HEK293 (cell line): ENCODE measurements at regions of chr22 and their contacts with region 1.

Region 1: GRCh38 chr22:41697126-41697775 is 2.1 kb upstream of the MEI1 start:
- H3K4me3 ChIP-seq: no peak overlapping the region
- H3K27ac ChIP-seq: no peak overlapping the region
- H3K4me1 ChIP-seq: no peaks in the 10 kb centered on the region
- CTCF ChIP-seq: peak; percentile 94

Region 2: DNA sequence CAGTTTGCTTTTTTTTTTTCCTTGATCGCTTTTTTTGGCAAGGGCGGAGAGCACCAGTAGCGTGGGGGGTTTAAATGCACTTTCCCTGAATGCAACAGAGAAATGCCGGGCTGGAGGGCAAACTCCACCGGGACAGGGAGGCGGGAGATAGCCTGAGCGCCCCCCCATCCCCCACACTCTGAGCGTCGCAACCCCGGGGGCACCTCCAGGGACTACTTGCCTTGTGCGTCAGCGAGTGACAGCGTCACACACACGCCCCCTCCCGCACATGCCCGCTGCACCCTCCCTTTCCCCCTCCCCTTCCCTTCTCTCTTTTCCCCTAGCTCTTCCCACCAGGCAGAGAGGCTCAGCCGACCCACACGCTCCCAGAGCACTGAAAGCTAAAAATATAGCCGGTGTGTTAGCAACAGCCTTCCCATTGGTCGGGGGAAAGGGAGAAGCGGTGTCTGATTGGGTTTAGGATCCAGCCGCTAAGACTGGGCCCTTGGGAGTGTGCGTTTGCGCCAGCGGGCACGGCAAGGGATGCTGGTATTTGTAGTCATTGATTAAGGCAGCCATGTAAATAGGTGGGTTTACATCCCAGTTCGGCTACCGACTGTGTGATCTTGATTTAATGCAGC is 249.0 kb before region 1 on chr22:
- CTCF ChIA-PET with region 1: no interaction called
- POLR2A ChIA-PET with region 1: no interaction called
- H3K4me3 ChIP-seq: peak overlapping the region; percentile 90
- H3K27ac ChIP-seq: peak overlapping the region; percentile 100
- H3K4me1 ChIP-seq: no peaks in the 10 kb centered on the region
- CTCF ChIP-seq: 0 out of 2 replicates have a peak, but pooled peaks have one; percentile 14

Region 3: GRCh38 chr22:41608386-41608785 is 88.9 kb before region 1 on chr22:
- CTCF ChIA-PET with region 1: no interaction called
- POLR2A ChIA-PET with region 1: no interaction called
- H3K4me3 ChIP-seq: no peak overlapping the region
- H3K27ac ChIP-seq: no peak overlapping the region
- H3K4me1 ChIP-seq: no peaks in the 10 kb centered on the region
- CTCF ChIP-seq: no peak

Region 4: DNA sequence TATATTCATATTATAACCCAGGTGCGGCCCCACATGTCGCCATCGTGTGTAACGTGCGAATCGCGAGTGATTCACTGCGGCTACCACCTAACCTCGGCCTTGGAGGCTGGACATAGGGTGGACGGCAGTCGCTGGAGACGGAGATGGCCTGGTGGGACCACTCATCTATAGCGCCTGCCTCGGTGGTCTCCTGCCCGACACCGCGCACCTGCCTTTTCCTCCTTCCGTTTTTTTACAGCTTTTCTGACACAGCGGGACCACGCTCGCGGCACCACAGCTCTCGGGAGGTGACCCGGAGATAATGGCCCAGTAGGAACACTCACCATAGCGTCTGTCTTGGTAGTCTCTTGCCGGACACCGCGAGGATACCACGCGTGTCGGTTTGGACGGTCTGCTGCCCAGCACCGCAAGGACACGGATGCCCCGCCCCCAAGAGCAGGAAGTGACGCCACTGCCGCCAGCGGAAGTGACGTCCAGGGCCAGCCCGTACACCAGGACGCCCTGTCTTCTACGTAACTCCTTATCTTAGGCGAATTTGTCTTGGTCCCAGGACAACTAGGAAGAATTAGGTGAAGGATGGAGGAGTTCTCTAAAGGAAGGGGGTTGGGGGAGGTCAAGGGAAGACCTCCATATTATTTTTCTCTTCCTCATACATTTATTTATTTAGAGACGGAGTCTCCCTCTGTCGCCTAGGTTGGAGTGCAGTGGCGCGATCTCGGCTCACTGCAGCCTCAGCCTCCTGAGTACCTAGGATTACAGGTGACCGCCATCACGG is 15.0 kb before region 1 on chr22:
- CTCF ChIA-PET with region 1: interaction called, 39 read pairs
- POLR2A ChIA-PET with region 1: no interaction called
- H3K4me3 ChIP-seq: peak overlapping the region; percentile 81
- H3K27ac ChIP-seq: peak overlapping the region; percentile 66
- H3K4me1 ChIP-seq: peaks cover 4% of the 10 kb centered on the region; the same call in 1 of the 2 replicates
- CTCF ChIP-seq: no peak

Region 5: GRCh38 chr22:41739576-41739975 is 42.3 kb after region 1 on chr22:
- CTCF ChIA-PET with region 1: interaction called, 72 read pairs
- POLR2A ChIA-PET with region 1: interaction called, 3 read pairs
- H3K4me3 ChIP-seq: no peak overlapping the region
- H3K27ac ChIP-seq: no peak overlapping the region
- H3K4me1 ChIP-seq: no peaks in the 10 kb centered on the region; the same call in 1 of the 2 replicates
- CTCF ChIP-seq: no peak

Region 6: DNA sequence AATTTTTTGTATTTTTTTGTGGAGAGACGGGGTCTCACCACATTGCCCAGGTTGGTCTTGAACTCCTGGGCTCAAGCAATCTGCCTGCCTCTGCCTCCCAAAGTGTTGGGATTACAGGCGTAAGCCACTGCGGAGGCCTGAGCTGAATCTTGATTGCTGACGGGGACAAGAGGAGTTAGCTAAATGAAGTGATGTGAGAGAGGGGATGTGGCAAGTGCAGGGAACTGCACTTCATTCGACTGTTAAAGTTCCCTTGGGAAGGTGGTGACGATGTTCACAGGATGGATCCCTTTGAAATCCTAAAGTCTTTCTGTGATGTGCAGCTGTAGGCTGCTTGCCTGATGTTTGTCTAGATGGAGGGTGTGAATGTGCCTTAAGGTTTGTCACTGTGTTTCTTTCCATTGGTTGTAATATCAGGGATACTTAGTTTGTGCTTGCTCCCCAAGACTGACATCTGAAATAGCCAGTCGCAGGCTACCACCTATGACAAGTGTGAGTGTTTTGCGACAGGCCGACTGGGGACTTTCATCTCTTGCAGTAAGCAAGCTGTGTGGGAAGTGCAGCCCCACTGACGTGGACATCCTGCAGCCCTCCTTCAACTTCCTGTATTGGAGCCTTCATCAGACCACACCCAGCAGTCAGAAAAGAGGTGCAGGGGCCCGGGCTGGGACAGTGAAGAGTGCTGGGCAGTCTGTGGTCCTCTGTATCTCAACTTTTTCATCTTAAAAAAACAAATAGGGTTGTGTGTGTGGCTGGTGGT is 83.7 kb after region 1 on chr22:
- CTCF ChIA-PET with region 1: interaction called, 26 read pairs
- POLR2A ChIA-PET with region 1: interaction called, 4 read pairs
- H3K4me3 ChIP-seq: no peak overlapping the region
- H3K27ac ChIP-seq: no peak overlapping the region
- H3K4me1 ChIP-seq: no peaks in the 10 kb centered on the region
- CTCF ChIP-seq: no peak

Region 7: DNA sequence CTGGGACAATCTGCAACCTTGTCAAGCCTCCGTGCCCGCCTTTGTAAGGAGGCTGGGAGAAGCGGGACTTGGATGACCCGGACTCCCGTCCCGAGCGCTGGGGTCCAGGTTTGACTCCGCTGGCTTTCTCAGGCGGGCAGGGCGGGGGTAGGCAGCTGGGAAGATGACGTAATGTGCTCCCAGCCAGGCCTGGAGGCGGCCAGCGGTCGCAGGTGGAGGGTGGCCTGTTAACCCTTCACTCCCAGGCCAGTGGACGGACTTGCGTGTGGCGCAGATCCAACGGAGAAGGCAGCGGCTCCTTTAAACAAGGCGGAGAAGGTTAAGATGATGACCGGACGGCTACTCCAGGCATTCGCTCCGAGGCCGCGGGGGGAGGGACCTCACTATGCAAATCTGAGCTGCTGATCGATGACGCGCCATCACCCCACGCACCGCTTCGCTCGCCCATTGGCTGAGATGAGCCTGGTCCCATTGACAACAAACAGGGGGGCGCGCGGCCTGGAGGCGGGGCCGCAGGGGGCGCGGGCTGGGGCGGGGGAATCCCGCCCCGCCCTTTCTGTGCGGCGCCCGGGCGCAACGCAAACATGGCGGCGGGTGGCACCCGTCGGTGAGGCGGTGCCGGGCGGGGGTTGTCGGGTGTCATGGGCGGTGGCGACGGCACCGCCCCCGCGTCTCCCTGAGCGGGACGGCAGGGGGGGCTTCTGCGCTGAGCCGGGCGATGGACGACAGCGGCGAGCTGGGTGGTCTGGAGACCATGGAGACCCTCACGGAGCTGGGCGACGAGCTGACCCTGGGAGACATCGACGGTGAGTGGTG is 135.5 kb after region 1 on chr22 and contains the start of gene SREBF2:
- CTCF ChIA-PET with region 1: interaction called, 12 read pairs
- POLR2A ChIA-PET with region 1: interaction called, 5 read pairs
- H3K4me3 ChIP-seq: peak within 1 kb of the TSS; percentile 96
- H3K27ac ChIP-seq: peak within 1 kb of the TSS; percentile 87
- H3K4me1 ChIP-seq: peaks cover 3% of the 10 kb centered on the region; the same call in 1 of the 2 replicates
- CTCF ChIP-seq: peak; percentile 69

Region 8: GRCh38 chr22:41919357-41920224 is 222.3 kb after region 1 on chr22:
- CTCF ChIA-PET with region 1: interaction called, 10 read pairs
- POLR2A ChIA-PET with region 1: no interaction called
- H3K4me3 ChIP-seq: no peak overlapping the region
- H3K27ac ChIP-seq: no peak overlapping the region
- H3K4me1 ChIP-seq: peaks cover 6% of the 10 kb centered on the region
- CTCF ChIP-seq: no peak

Region 9: DNA sequence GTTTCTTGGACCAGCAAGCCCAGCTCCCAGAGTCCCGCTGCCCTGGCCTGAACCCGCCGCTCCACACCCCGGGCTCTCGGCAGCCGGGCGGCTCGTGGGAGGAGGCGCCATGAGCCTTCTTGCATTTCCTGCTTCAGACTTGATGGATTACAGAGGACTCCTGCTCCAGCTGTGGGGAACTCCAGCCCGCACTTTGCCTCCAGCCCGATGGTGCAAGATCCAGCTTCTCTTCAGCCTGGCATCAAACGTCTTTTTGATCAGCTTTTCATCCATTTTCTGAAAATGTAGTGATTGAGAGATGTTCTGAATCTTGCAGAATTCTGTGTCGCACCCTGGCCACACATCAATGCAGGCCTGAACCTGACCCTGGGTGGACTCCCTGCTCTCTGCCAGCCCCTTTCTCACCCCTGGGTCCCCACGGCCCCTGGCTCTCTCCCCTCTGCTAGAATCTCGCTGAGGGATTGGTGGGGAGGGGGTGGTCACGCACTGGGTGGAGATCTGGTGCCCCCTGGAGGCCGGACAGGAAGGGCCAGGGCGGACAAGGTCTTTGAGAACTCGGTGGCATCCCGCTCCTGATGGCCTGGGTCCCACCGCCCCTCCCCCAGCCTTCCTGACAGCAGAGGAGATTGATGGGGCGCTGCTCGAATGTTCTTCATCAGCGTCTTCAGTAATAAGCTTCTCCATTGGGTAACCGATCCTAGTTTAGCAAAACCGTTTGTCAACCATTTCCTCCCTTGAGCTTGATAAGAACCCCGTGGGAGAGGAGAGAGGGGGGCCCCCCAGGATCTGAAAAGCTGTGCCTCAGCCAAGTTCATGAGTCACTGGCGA is 747.0 kb after region 1 on chr22:
- CTCF ChIA-PET with region 1: interaction called, 16 read pairs
- POLR2A ChIA-PET with region 1: no interaction called
- H3K4me3 ChIP-seq: peak overlapping the region; percentile 34
- H3K27ac ChIP-seq: peak overlapping the region; percentile 13
- H3K4me1 ChIP-seq: peaks cover 8% of the 10 kb centered on the region
- CTCF ChIP-seq: peak; percentile 81